Activated CD4-positive, alpha-beta T cell treated with anti-CD3 and anti-CD28 coated beads, Interleukin-2, amount 10 ng/mL, durations not matched to agents 24 days and 14 days (primary cell): ENCODE measurements at regions of chr19 and their contacts with region 1.

Region 1: GRCh38 chr19:14529254-14530004 is at the start of gene TECR:
- DNase-seq: peak; percentile 100
- H3K4me3 Mint-ChIP-seq: peak within 1 kb of the TSS; percentile 90
- H3K27ac Mint-ChIP-seq: peak within 1 kb of the TSS; percentile 94
- H3K4me1 Mint-ChIP-seq: peaks cover 14% of the 10 kb centered on the region
- H3K27me3 Mint-ChIP-seq: no peaks in the 10 kb centered on the region
- total RNA-seq, gene TECR: 108 and 119 TPM in 2 replicates

Region 2: GRCh38 chr19:12913011-12913561 is 1616.3 kb before region 1 on chr19:
- intact Hi-C with region 1: loop called (anchors 10 kb)
- DNase-seq: no peak
- H3K4me3 Mint-ChIP-seq: no peak overlapping the region
- H3K27ac Mint-ChIP-seq: peak overlapping the region; percentile 70
- H3K4me1 Mint-ChIP-seq: peaks cover 16% of the 10 kb centered on the region
- H3K27me3 Mint-ChIP-seq: no peaks in the 10 kb centered on the region

Region 3: GRCh38 chr19:13162518-13163314 is 1366.7 kb before region 1 on chr19:
- intact Hi-C with region 1: loop called (anchors 1 kb)
- DNase-seq: peak; percentile 98
- H3K4me3 Mint-ChIP-seq: peak overlapping the region; percentile 89
- H3K27ac Mint-ChIP-seq: peak overlapping the region; percentile 95
- H3K4me1 Mint-ChIP-seq: peaks cover 57% of the 10 kb centered on the region
- H3K27me3 Mint-ChIP-seq: no peaks in the 10 kb centered on the region

Region 4: GRCh38 chr19:13846557-13847406 is 682.6 kb before region 1 on chr19:
- intact Hi-C with region 1: loop called (anchors 10 kb)
- DNase-seq: peak; percentile 99
- H3K4me3 Mint-ChIP-seq: peak overlapping the region; percentile 87
- H3K27ac Mint-ChIP-seq: peak overlapping the region; percentile 99
- H3K4me1 Mint-ChIP-seq: peaks cover 46% of the 10 kb centered on the region
- H3K27me3 Mint-ChIP-seq: no peaks in the 10 kb centered on the region

Region 5: GRCh38 chr19:14117668-14118164 is 411.7 kb before region 1 on chr19 and contains the start of gene PRKACA:
- intact Hi-C with region 1: no loop called
- DNase-seq: peak; percentile 100
- H3K4me3 Mint-ChIP-seq: peak within 1 kb of the TSS; percentile 98
- H3K27ac Mint-ChIP-seq: peak within 1 kb of the TSS; percentile 94
- H3K4me1 Mint-ChIP-seq: peaks cover 34% of the 10 kb centered on the region
- H3K27me3 Mint-ChIP-seq: no peaks in the 10 kb centered on the region
- total RNA-seq, gene PRKACA: 62.6 and 64.7 TPM in 2 replicates

Region 6: GRCh38 chr19:14517840-14518505 is 11.5 kb before region 1 on chr19 and contains the start of gene DNAJB1:
- intact Hi-C with region 1: loop called (anchors 1 kb)
- DNase-seq: peak; percentile 94
- H3K4me3 Mint-ChIP-seq: peak within 1 kb of the TSS; percentile 90
- H3K27ac Mint-ChIP-seq: peak within 1 kb of the TSS; percentile 96
- H3K4me1 Mint-ChIP-seq: peaks cover 60% of the 10 kb centered on the region
- H3K27me3 Mint-ChIP-seq: no peaks in the 10 kb centered on the region
- total RNA-seq, gene DNAJB1: 117 and 126 TPM in 2 replicates